Naive thymus-derived CD4-positive, alpha-beta T cell (primary cell): ENCODE measurements at regions of chr17 and their contacts with region 1.

Region 1: GRCh38 chr17:42221937-42222745 is 27.8 kb upstream of the GHDC start:
- DNase-seq: peak; percentile 39 to 80 (median 71)
- ATAC-seq: peak; percentile 95
- H3K4me3 ChIP-seq: no peak overlapping the region
- H3K4me3 Mint-ChIP-seq: no peak overlapping the region
- H3K27ac ChIP-seq: no peak overlapping the region
- H3K27ac Mint-ChIP-seq: peak overlapping the region in 8 of 9 donors; percentile 53 to 88 (median 70)
- H3K4me1 ChIP-seq: peaks cover 0 to 5% of the 10 kb centered on the region in 2 donors
- H3K4me1 Mint-ChIP-seq: peaks cover 0 to 9% (median 6%) of the 10 kb centered on the region in 7 donors
- H3K27me3 ChIP-seq: no peaks in the 10 kb centered on the region
- H3K27me3 Mint-ChIP-seq: no peaks in the 10 kb centered on the region

Region 2: DNA sequence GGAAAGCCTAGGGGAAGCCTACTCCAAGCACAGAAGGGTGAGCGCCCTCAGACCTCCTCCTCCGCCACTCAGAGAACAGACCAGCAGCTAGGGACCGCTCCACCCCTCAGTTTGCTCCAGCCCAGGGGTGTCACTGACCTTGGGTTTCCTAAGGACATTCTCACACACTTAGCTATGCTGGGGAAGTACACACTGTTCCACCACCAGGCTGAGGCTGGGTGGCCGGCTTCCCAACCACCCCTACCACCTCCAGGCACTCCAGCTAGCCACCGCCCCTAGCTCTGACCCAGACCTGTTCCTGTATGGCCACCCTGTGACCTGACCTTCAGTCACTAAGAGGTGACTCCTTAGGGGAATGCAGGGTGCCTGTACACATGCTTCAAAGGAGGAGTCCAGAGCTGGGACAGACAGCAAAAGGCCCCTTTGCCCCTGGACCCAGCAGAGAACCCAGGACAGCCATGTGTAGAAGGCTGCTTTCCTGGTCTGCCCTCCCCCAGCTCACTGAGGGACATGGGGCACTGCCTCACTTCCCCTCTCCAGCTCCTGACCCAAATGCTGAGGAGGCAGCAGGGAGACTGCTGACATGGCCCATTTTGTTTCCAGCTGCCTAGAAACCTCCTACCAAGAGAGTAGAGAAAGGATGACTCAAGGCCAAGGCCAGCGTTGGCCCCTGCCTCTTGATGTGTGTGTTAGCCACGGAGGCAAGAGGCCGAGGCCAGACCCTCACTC is 92.9 kb before region 1 on chr17:
- CTCF ChIA-PET with region 1: no interaction called
- POLR2A ChIA-PET with region 1: no interaction called
- intact Hi-C with region 1: no loop called
- DNase-seq: no peak
- ATAC-seq: no peak
- H3K4me3 ChIP-seq: no peak overlapping the region
- H3K4me3 Mint-ChIP-seq: no peak overlapping the region
- H3K27ac ChIP-seq: peak overlapping the region; percentile 39
- H3K27ac Mint-ChIP-seq: peak overlapping the region in 3 of 9 donors; percentile 16 to 56 (median 22)
- H3K4me1 ChIP-seq: peaks cover 10 to 13% of the 10 kb centered on the region in 2 donors
- H3K4me1 Mint-ChIP-seq: peaks cover 17 to 36% (median 31%) of the 10 kb centered on the region in 7 donors
- H3K27me3 ChIP-seq: no peaks in the 10 kb centered on the region
- H3K27me3 Mint-ChIP-seq: no peaks in the 10 kb centered on the region

Region 3: GRCh38 chr17:42233941-42234340 is 11.8 kb after region 1 on chr17:
- CTCF ChIA-PET with region 1: interaction called, 12 read pairs
- POLR2A ChIA-PET with region 1: interaction called, 4 read pairs
- intact Hi-C with region 1: no loop called
- DNase-seq: no peak
- ATAC-seq: no peak
- H3K4me3 ChIP-seq: no peak overlapping the region
- H3K4me3 Mint-ChIP-seq: no peak overlapping the region
- H3K27ac ChIP-seq: no peak overlapping the region
- H3K27ac Mint-ChIP-seq: peak overlapping the region in 8 of 9 donors; percentile 36 to 82 (median 78)
- H3K4me1 ChIP-seq: peaks cover 0 to 5% of the 10 kb centered on the region in 2 donors
- H3K4me1 Mint-ChIP-seq: peaks cover 15 to 60% (median 50%) of the 10 kb centered on the region in 7 donors
- H3K27me3 ChIP-seq: no peaks in the 10 kb centered on the region
- H3K27me3 Mint-ChIP-seq: no peaks in the 10 kb centered on the region

Region 4: GRCh38 chr17:42276359-42276608 is 54.1 kb after region 1 on chr17 and contains the start of gene STAT5B:
- CTCF ChIA-PET with region 1: interaction called, 20 read pairs
- POLR2A ChIA-PET with region 1: interaction called, 25 read pairs
- intact Hi-C with region 1: loop called (anchors 1 to 2 kb)
- DNase-seq: peak in 8 of 9 donors; percentile 52 to 82 (median 73)
- ATAC-seq: peak; percentile 84
- H3K4me3 ChIP-seq: peak within 1 kb of the TSS; percentile 93
- H3K4me3 Mint-ChIP-seq: peak within 1 kb of the TSS; percentile 95 to 100 (median 98)
- H3K27ac ChIP-seq: peak within 1 kb of the TSS; percentile 90
- H3K27ac Mint-ChIP-seq: peak within 1 kb of the TSS; percentile 91 to 99 (median 97)
- H3K4me1 ChIP-seq: peaks cover 30 to 32% of the 10 kb centered on the region in 2 donors
- H3K4me1 Mint-ChIP-seq: peaks cover 34 to 56% (median 50%) of the 10 kb centered on the region in 7 donors
- H3K27me3 ChIP-seq: no peaks in the 10 kb centered on the region
- H3K27me3 Mint-ChIP-seq: no peaks in the 10 kb centered on the region
- total RNA-seq, gene STAT5B: 143 to 192 (median 183) TPM

Region 5: DNA sequence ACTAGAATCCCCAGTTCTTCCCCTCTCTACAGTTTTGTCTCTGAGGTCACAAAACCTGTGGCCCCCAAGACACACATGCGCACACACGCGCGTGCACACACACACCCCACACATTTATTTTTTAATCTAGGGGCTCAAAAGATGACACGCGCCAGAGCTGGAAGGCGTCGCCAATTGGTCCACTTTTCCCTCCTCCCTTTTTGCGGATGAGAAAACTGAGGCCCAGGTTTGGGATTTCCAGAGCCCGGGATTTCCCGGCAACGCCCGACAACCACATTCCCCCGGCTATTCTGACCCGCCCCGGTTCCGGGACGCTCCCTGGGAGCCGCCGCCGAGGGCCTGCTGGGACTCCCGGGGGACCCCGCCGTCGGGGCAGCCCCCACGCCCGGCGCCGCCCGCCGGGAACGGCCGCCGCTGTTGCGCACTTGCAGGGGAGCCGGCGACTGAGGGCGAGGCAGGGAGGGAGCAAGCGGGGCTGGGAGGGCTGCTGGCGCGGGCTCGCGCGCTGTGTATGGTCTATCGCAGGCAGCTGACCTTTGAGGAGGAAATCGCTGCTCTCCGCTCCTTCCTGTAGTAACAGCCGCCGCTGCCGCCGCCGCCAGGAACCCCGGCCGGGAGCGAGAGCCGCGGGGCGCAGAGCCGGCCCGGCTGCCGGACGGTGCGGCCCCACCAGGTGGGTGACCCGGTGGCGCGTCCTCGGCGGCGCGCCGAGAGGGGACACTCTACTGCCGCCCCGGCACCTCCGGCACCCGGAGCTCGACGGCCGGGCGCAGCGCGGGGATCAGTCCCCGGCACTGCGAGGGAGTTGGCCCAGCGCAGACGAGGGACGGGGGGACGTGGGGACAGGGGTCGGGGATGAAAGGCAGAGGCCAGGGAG is 66.0 kb after region 1 on chr17 and contains the start of gene STAT5A:
- CTCF ChIA-PET with region 1: interaction called, 20 read pairs
- POLR2A ChIA-PET with region 1: interaction called, 16 read pairs
- intact Hi-C with region 1: loop called (anchors 1 kb)
- DNase-seq: peak; percentile 58 to 83 (median 79)
- ATAC-seq: peak; percentile 90
- H3K4me3 ChIP-seq: peak within 1 kb of the TSS; percentile 88
- H3K4me3 Mint-ChIP-seq: peak within 1 kb of the TSS; percentile 87 to 97 (median 93)
- H3K27ac ChIP-seq: peak within 1 kb of the TSS; percentile 93
- H3K27ac Mint-ChIP-seq: peak within 1 kb of the TSS; percentile 93 to 99 (median 96)
- H3K4me1 ChIP-seq: peaks cover 18 to 24% of the 10 kb centered on the region in 2 donors
- H3K4me1 Mint-ChIP-seq: peaks cover 27 to 65% (median 54%) of the 10 kb centered on the region in 7 donors
- H3K27me3 ChIP-seq: no peaks in the 10 kb centered on the region
- H3K27me3 Mint-ChIP-seq: no peaks in the 10 kb centered on the region
- total RNA-seq, gene STAT5A: 111 to 162 (median 150) TPM

Region 6: GRCh38 chr17:42322382-42323267 is 100.5 kb after region 1 on chr17:
- CTCF ChIA-PET with region 1: interaction called, 31 read pairs
- POLR2A ChIA-PET with region 1: no interaction called
- intact Hi-C with region 1: no loop called
- DNase-seq: peak; percentile 80 to 95 (median 93)
- ATAC-seq: peak; percentile 100
- H3K4me3 ChIP-seq: no peak overlapping the region
- H3K4me3 Mint-ChIP-seq: peak overlapping the region in 3 of 10 donors; percentile 19 to 45 (median 27)
- H3K27ac ChIP-seq: peak overlapping the region; percentile 40
- H3K27ac Mint-ChIP-seq: peak overlapping the region; percentile 42 to 91 (median 80)
- H3K4me1 ChIP-seq: peaks cover 3 to 23% of the 10 kb centered on the region in 2 donors
- H3K4me1 Mint-ChIP-seq: peaks cover 19 to 55% (median 43%) of the 10 kb centered on the region in 7 donors
- H3K27me3 ChIP-seq: no peaks in the 10 kb centered on the region
- H3K27me3 Mint-ChIP-seq: no peaks in the 10 kb centered on the region

Region 7: DNA sequence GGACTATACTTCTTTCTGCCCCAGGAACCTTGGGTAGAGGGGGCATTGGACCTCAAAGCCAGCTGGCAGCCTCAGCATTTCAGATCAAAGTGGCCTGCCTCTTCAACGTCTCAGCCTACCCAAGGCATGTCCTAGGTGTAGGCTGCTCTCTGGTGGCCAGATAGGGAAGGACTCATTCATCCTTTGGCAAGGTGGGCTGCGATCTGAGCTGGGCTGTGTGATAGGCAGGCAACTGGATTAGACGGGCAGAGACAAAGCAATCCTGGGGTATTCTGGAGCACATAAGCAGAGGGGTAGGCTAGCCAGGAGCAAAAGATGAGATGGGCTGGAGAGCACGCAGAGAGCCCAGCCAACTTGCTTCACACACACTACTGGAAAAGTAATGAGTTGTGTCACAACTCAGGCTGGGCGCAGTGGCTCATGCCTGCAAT is 305.1 kb after region 1 on chr17:
- CTCF ChIA-PET with region 1: no interaction called
- POLR2A ChIA-PET with region 1: interaction called, 4 read pairs
- intact Hi-C with region 1: loop called in 1 of 2 experiments (anchors 1 kb)
- DNase-seq: peak in 8 of 9 donors; percentile 46 to 69 (median 62)
- ATAC-seq: peak; percentile 84
- H3K4me3 ChIP-seq: no peak overlapping the region
- H3K4me3 Mint-ChIP-seq: peak overlapping the region in 7 of 10 donors; percentile 6 to 73 (median 25)
- H3K27ac ChIP-seq: no peak overlapping the region
- H3K27ac Mint-ChIP-seq: peak overlapping the region in 8 of 9 donors; percentile 5 to 91 (median 68)
- H3K4me1 ChIP-seq: peaks cover 33 to 38% of the 10 kb centered on the region in 2 donors
- H3K4me1 Mint-ChIP-seq: peaks cover 23 to 44% (median 32%) of the 10 kb centered on the region in 7 donors
- H3K27me3 ChIP-seq: no peaks in the 10 kb centered on the region
- H3K27me3 Mint-ChIP-seq: peaks cover 0 to 4% (median 0%) of the 10 kb centered on the region in 5 donors